ENCODE measurements at regions of chr6 and their contacts with region 1.

Region 1: DNA sequence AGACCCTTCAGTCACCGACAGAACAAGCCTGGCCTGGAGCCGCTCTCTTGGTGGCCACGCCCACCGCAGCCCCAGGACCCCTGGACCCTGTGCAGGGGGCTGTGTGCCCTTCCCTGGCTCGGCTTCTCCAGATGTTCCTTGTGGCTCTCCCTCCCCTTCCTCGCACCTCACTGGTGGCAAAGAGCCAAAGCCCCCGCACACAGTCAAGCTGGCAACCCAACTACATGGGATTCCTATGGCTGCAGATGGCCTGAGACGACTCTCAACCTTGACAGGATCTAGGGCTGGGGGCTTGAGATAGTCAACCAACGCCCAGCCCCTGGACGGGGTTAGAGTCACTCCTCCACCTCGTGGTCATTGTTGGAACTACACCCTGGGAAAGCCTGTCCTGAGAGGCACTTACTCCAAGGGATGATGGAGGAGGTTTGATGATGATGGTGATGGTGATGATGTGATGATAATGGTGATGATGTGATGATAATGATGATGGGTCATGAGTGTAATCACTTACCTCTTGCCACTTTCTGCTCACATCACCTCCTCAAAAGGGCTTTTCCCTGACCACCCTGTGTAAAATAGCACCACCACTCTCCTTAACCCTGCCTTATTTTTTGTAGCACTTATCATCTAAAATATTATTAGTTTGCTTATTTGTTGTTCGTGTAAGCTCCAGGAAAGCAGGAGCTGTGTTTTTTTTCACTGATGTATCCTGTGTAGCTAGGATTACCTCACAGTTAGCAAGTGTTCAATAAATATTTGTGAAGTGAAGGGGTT is 278.4 kb downstream of the LRFN2 start:
- H3K4me3 ChIP-seq: no peak overlapping the region
- H3K27ac ChIP-seq: no peak overlapping the region
- H3K4me1 ChIP-seq: no peaks in the 10 kb centered on the region
- CTCF ChIP-seq: peak; percentile 71

Region 2: GRCh38 chr6:39980839-39981580 is 327.7 kb before region 1 on chr6:
- CTCF ChIA-PET with region 1: interaction called, 28 read pairs
- POLR2A ChIA-PET with region 1: no interaction called
- H3K4me3 ChIP-seq: no peak overlapping the region
- H3K27ac ChIP-seq: no peak overlapping the region
- H3K4me1 ChIP-seq: no peaks in the 10 kb centered on the region
- CTCF ChIP-seq: peak; percentile 71; the same call in 1 of the 2 replicates

Region 3: GRCh38 chr6:40138273-40138720 is 170.4 kb before region 1 on chr6:
- CTCF ChIA-PET with region 1: no interaction called
- POLR2A ChIA-PET with region 1: no interaction called
- H3K4me3 ChIP-seq: no peak overlapping the region
- H3K27ac ChIP-seq: no peak overlapping the region
- H3K4me1 ChIP-seq: no peaks in the 10 kb centered on the region
- CTCF ChIP-seq: no peak

Region 4: GRCh38 chr6:40251637-40252300 is 57.0 kb before region 1 on chr6:
- CTCF ChIA-PET with region 1: no interaction called
- POLR2A ChIA-PET with region 1: no interaction called
- H3K4me3 ChIP-seq: no peak overlapping the region
- H3K27ac ChIP-seq: no peak overlapping the region
- H3K4me1 ChIP-seq: no peaks in the 10 kb centered on the region
- CTCF ChIP-seq: no peak

Measured in HEK293 (cell line).